AG04449 (cell line): ENCODE measurements at regions of chr4 and their contacts with region 1.

Region 1: GRCh38 chr4:38062088-38062893 is 102.1 kb downstream of the PTTG2 start:
- DNase-seq: no peak
- H3K4me3 ChIP-seq: no peak overlapping the region
- CTCF ChIP-seq: peak; percentile 62

Region 2: GRCh38 chr4:38046728-38047489 is 15.4 kb before region 1 on chr4:
- CTCF ChIA-PET with region 1: interaction called, 18 read pairs
- POLR2A ChIA-PET with region 1: no interaction called
- DNase-seq: no peak
- H3K4me3 ChIP-seq: no peak overlapping the region
- CTCF ChIP-seq: no peak

Region 3: GRCh38 chr4:38078590-38079421 is 16.5 kb after region 1 on chr4:
- CTCF ChIA-PET with region 1: interaction called, 20 read pairs
- POLR2A ChIA-PET with region 1: no interaction called
- DNase-seq: peak; percentile 70
- H3K4me3 ChIP-seq: no peak overlapping the region
- CTCF ChIP-seq: no peak

Region 4: GRCh38 chr4:38255572-38255971 is 193.3 kb after region 1 on chr4:
- CTCF ChIA-PET with region 1: no interaction called
- POLR2A ChIA-PET with region 1: no interaction called
- DNase-seq: no peak
- H3K4me3 ChIP-seq: no peak overlapping the region
- CTCF ChIP-seq: no peak